Colonic mucosa (tissue), 4 donors: ENCODE measurements at regions of chr13 and their contacts with region 1.

Region 1: DNA sequence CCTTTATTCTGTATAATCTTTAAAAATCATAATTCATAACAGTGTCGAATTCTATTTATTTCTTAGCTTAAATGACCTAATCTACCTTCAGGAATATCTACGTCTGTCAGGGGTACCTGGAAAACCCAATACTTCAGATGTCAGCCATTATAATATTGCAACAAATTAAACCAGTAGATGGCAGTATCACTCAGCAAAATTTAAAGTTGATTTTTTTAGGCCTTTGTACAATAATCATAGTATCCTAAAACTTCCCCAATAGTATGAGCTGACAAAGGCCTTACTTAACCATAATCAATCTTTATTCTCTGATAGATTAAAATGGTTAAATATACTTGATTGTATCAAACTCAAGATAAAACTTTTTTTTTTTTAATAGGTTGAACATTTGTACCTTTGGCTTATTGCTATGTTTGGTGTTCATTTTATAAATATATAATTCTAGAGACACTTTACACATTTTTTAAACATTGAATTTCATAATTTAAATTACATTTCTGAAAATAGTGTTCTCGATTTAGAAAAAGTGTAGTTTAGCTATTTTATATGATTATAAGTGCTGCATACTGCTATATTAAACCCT is 830.2 kb upstream of the SPRY2 start:
- DNase-seq: no peak
- H3K4me3 ChIP-seq: no peak overlapping the region
- H3K27ac ChIP-seq: no peak overlapping the region
- H3K4me1 ChIP-seq: no peaks in the 10 kb centered on the region
- H3K27me3 ChIP-seq: no peaks in the 10 kb centered on the region
- CTCF ChIP-seq: peak; percentile 49

Region 2: DNA sequence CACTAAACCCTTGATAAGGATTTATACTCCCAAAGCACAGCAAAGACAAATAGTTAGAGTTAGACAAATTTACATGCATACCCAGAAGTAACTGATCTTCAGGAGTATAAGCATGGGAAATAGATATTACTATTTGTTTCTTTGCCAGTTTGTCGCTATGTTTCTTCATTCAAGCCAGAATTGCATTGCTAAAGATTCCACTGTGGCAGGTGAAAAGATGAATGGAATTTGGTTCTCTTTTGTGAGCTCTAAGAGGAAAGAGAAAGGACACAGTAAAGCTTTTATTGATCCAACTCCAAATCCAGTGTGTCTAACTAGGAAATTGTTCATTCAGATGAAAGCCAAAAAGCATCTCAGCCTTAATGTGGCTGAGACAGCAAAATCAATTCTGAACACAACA is 537.9 kb before region 1 on chr13:
- intact Hi-C with region 1: no loop called
- DNase-seq: no peak
- H3K4me3 ChIP-seq: no peak overlapping the region
- H3K27ac ChIP-seq: no peak overlapping the region
- H3K4me1 ChIP-seq: no peaks in the 10 kb centered on the region
- H3K27me3 ChIP-seq: no peaks in the 10 kb centered on the region
- CTCF ChIP-seq: no peak

Region 3: GRCh38 chr13:81480634-81481033 is 309.5 kb after region 1 on chr13:
- intact Hi-C with region 1: loop called (anchors 5 kb)
- DNase-seq: no peak
- H3K4me3 ChIP-seq: no peak overlapping the region
- H3K27ac ChIP-seq: no peak overlapping the region
- H3K4me1 ChIP-seq: no peaks in the 10 kb centered on the region
- H3K27me3 ChIP-seq: no peaks in the 10 kb centered on the region
- CTCF ChIP-seq: no peak